Activated CD4-positive, alpha-beta T cell treated with anti-CD3 and anti-CD28 coated beads for 36 hours (primary cell): ENCODE measurements at regions of chr19 and their contacts with region 1.

Region 1: GRCh38 chr19:36687214-36688056 is at the start of gene ZNF567:
- DNase-seq: peak; percentile 99
- ATAC-seq: peak; percentile 93
- H3K4me3 Mint-ChIP-seq: peak within 1 kb of the TSS; percentile 99
- H3K27ac Mint-ChIP-seq: peak within 1 kb of the TSS; percentile 96
- H3K4me1 Mint-ChIP-seq: peaks cover 27% of the 10 kb centered on the region
- H3K27me3 Mint-ChIP-seq: no peaks in the 10 kb centered on the region
- total RNA-seq, gene ZNF567: 7.4 to 8.6 TPM

Region 2: GRCh38 chr19:36418287-36419001 is 269.0 kb before region 1 on chr19 and contains the start of gene ZFP82:
- CTCF ChIA-PET with region 1: no interaction called
- POLR2A ChIA-PET with region 1: no interaction called
- intact Hi-C with region 1: loop called in 1 of 2 experiments (anchors 5 kb)
- DNase-seq: peak; percentile 89
- ATAC-seq: peak; percentile 90
- H3K4me3 Mint-ChIP-seq: peak within 1 kb of the TSS; percentile 94
- H3K27ac Mint-ChIP-seq: peak within 1 kb of the TSS; percentile 97
- H3K4me1 Mint-ChIP-seq: peaks cover 12% of the 10 kb centered on the region
- H3K27me3 Mint-ChIP-seq: peaks cover 13% of the 10 kb centered on the region
- total RNA-seq, gene ZFP82: 8.4 to 8.8 TPM

Region 3: DNA sequence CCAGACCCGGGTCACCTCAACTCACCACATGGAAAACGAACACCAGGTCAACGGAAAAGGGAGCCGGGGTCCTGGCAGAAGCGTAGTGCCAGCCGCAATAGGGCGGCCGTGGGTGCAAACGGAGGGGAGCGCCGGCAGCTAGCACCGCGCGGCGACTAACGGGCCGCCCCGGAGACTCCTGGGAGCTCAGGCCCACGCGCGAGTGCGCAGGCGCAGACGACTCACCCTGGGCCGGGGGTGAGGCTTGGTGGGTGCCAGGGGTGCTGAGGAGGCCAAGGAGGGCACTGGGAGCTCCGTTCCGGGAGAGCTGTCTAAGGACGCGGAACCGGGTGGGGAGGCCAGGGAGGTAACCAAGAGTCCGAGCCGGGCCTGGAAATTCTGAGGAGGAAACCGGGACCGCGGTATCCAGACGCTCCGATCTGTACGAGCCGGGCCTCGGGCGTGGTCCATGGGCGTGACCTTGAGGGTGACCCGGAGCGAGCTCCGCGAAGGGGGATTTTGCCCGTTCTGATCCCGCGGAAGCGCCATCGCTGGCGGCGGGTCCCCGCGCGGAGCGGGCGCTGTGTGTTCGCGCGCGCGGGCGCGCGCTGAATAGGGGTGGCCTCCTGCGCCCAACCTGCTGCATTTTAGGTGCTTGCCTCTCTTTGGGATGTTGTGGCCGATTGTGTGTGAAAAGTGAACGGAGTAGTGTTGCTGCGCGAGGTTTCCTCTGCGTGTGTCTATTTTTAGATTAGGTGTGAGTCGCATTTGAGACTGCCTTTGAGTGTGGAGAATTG is 82.1 kb before region 1 on chr19 and contains the start of gene ZNF382:
- CTCF ChIA-PET with region 1: no interaction called
- POLR2A ChIA-PET with region 1: no interaction called
- intact Hi-C with region 1: loop called in 1 of 2 experiments (anchors 1 kb)
- DNase-seq: peak; percentile 94
- ATAC-seq: peak; percentile 86
- H3K4me3 Mint-ChIP-seq: peak within 1 kb of the TSS; percentile 81
- H3K27ac Mint-ChIP-seq: peak within 1 kb of the TSS; percentile 91
- H3K4me1 Mint-ChIP-seq: peaks cover 20% of the 10 kb centered on the region
- H3K27me3 Mint-ChIP-seq: no peaks in the 10 kb centered on the region
- total RNA-seq, gene ZNF382: 14.9 to 20.0 TPM

Region 4: GRCh38 chr19:36796076-36796992 is 108.9 kb after region 1 on chr19:
- CTCF ChIA-PET with region 1: no interaction called
- POLR2A ChIA-PET with region 1: no interaction called
- intact Hi-C with region 1: loop called in 1 of 2 experiments (anchors 2 kb)
- DNase-seq: no peak
- ATAC-seq: no peak
- H3K4me3 Mint-ChIP-seq: peak overlapping the region; percentile 83
- H3K27ac Mint-ChIP-seq: peak overlapping the region; percentile 92
- H3K4me1 Mint-ChIP-seq: peaks cover 14% of the 10 kb centered on the region
- H3K27me3 Mint-ChIP-seq: peaks cover 4% of the 10 kb centered on the region

Region 5: GRCh38 chr19:37172368-37173366 is 485.2 kb after region 1 on chr19 and contains the start of gene ZNF585A:
- CTCF ChIA-PET with region 1: no interaction called
- POLR2A ChIA-PET with region 1: no interaction called
- intact Hi-C with region 1: loop called in 1 of 2 experiments (anchors 5 kb)
- DNase-seq: peak; percentile 92
- ATAC-seq: peak; percentile 100
- H3K4me3 Mint-ChIP-seq: no peak within 1 kb of the TSS
- H3K27ac Mint-ChIP-seq: no peak within 1 kb of the TSS
- H3K4me1 Mint-ChIP-seq: no peaks in the 10 kb centered on the region
- H3K27me3 Mint-ChIP-seq: no peaks in the 10 kb centered on the region
- total RNA-seq, gene ZNF585A: 8.7 to 9.8 TPM